Psoas muscle (tissue), 8 donors: ENCODE measurements at regions of chr12 and their contacts with region 1.

Region 1: GRCh38 chr12:77925536-77926108 is 94.9 kb downstream of the NAV3 start:
- DNase-seq: peak; percentile 43 to 70
- ATAC-seq: peak; percentile 61 to 82 (median 68)
- H3K4me3 ChIP-seq: no peak overlapping the region
- H3K27ac ChIP-seq: no peak overlapping the region
- H3K4me1 ChIP-seq: no peaks in the 10 kb centered on the region
- H3K27me3 ChIP-seq: no peaks in the 10 kb centered on the region
- CTCF ChIP-seq: peak; percentile 61

Region 2: DNA sequence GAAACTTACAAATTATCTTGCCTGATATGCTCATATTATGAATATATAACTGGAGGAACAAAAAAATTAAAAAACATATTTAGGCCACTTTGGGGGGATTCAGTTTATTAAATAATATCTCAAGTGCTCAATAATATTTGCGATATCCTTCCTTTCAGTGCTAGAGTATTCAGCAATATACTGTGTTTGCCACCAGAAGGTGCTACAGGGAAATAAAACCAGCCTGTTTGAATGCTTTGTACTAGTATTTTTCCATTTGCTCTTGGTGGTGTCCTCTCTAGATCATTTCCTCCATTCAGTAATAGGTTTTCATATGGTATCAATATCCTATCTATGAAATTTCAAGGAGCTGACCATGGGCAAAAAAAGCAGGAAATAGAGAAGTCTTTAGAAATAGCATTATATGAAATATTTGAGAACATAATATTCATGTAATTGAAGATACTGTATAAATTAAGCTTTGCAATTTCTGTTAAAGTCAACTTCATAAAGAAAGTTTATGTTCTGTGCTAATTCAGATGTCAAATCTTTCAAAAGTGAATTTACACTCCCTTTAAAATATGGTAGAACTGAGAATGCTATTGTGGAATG is 201.2 kb before region 1 on chr12:
- intact Hi-C with region 1: loop called (anchors 5 to 10 kb)
- DNase-seq: no peak
- ATAC-seq: peak in 1 of 4 donors; percentile 52
- H3K4me3 ChIP-seq: no peak overlapping the region
- H3K27ac ChIP-seq: no peak overlapping the region
- H3K4me1 ChIP-seq: no peaks in the 10 kb centered on the region
- H3K27me3 ChIP-seq: no peaks in the 10 kb centered on the region
- CTCF ChIP-seq: peak; percentile 44